Thyroid gland (tissue), 4 donors: ENCODE measurements at regions of chr16 and their contacts with region 1.

Region 1: DNA sequence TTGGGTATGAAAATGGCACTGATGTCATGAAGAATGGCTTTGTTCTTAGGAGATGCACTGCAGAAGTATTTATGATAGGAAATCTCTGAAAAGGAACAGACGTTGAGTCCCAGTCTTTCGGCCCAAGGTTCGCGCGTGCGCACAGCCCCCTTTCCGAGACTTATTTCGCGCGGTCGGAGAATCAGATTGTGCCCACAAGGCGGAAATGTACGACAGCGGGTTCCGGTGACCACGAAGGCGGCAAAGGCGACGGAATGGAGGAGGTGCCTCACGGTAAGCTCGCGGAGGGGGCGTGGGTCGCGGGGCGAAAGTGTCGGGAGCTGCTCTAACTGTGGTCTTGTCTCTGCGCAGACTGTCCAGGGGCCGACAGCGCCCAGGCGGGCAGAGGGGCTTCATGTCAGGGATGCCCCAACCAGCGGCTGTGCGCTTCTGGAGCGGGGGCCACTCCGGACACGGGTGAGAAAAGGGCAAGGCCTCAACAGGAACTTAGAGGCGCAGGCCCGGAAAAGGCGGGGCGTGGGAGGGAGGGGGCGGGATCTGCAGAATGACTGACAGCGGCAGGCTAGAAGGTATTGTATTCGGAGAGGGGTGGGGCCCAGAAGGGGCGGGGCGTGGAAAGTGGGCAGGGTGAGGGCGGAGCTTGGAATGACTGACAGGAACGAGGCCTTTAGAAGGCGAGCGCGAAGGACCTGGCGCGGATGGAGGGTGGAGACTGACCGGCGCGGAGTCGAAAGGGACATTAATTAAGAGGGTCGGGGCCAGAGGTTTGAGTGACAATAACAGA is at the start of gene NUBP1:
- DNase-seq: peak; percentile 99
- H3K4me3 ChIP-seq: peak within 1 kb of the TSS in 2 of 3 donors; percentile 41 to 43
- H3K27ac ChIP-seq: peak within 1 kb of the TSS; percentile 95 to 97 (median 97)
- H3K4me1 ChIP-seq: peaks cover 7 to 8% of the 10 kb centered on the region in 2 donors
- H3K27me3 ChIP-seq: no peaks in the 10 kb centered on the region
- CTCF ChIP-seq: no peak
- POLR2A ChIP-seq: peak; percentile 16 to 82
- total RNA-seq, gene NUBP1: 28.0 to 42.4 (median 33.6) TPM

Region 2: DNA sequence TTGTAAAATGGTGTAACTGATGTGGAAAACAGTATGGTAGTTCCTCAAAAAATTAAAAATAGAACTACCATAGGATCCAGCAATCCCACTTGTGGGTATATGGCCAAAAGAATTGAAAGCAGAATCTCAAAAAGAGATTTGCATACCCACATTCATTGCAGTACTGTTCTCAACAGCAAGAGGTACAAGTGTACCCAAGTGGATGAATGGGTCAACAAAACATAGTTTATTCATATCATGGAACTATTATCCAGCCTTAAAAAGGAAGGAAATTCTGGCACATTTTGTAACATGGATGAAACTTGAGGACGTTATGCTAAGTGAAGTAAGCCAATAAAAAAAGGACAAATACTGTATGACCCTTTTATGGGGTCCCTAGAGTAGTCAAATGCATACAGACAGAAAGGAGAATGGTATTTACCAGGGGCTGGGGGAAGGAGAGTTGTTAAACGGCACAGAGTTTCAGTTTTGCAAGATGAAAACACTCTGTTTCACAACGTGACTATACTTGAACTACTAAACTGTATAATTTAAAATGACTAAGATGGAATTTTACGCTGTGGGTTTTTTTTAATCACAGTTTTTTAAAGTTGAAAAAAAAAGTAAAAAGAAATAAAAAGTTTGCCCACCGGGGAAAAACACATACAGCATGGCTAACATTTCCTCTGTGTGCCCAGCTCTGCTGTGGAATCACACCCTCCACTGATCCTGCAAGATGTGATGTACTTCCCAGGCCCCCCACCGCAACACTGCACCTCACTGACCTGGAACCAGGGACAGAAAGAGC is 68.7 kb after region 1 on chr16:
- intact Hi-C with region 1: no loop called
- DNase-seq: no peak
- H3K4me3 ChIP-seq: no peak overlapping the region
- H3K27ac ChIP-seq: no peak overlapping the region
- H3K4me1 ChIP-seq: no peaks in the 10 kb centered on the region
- H3K27me3 ChIP-seq: no peaks in the 10 kb centered on the region
- CTCF ChIP-seq: no peak
- POLR2A ChIP-seq: no peak

Region 3: GRCh38 chr16:10828851-10829731 is 85.3 kb after region 1 on chr16:
- intact Hi-C with region 1: loop called (anchors 10 kb)
- DNase-seq: peak; percentile 99
- H3K4me3 ChIP-seq: no peak overlapping the region
- H3K27ac ChIP-seq: peak overlapping the region; percentile 82 to 99 (median 95)
- H3K4me1 ChIP-seq: peaks cover 40 to 54% of the 10 kb centered on the region in 2 donors
- H3K27me3 ChIP-seq: no peaks in the 10 kb centered on the region
- CTCF ChIP-seq: no peak
- POLR2A ChIP-seq: peak in 1 of 2 donors; percentile 27